ENCODE measurements at regions of chr1 and their contacts with region 1.

Region 1: DNA sequence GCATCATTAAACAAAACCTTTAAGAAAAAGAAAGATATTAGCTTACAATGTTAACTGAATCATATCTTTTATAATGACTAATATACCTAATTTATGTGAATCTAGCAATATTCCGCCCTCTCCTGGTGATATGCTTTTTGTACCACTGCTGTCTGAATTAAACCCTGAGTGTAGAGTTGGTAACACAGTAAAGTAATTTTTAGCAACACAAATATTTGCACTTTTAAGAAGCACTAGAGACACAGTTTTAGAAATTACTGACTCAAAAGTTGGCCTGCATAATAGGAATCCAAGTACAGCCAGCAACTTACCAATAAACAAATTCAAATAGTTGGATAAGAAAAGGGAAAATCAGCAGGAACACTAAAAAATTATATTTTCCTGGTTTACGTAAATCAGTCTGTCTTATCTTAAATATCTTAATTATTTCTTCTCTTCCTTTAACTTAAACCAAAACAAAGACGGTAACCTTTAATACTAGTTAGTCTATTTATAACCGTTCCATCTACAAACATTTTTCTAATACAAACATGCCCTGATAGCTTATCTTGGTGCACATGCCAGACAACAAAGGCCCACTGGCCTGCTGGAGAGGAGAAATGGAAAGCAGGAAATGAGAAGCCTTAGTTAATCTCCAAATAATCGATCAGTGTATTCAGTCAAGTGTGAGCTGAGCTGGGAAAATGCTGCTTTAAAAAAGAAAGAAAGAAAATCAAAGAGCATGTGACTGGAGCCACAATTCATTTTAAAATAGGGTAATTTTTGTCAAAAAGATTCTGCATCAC is 246.0 kb downstream of the RERE start:
- DNase-seq: peak; percentile 43
- H3K4me3 ChIP-seq: no peak overlapping the region; a peak in 1 of 4 replicates
- H3K27ac ChIP-seq: peak overlapping the region; percentile 34 to 90; a peak in 3 of 4 replicates
- H3K4me1 ChIP-seq: peaks cover 18 to 21% of the 10 kb centered on the region in 2 experiments; a peak in 3 of 4 replicates
- H3K27me3 ChIP-seq: no peaks in the 10 kb centered on the region
- CTCF ChIP-seq: peak; percentile 68
- EP300 ChIP-seq: peak in 1 of 2 experiments; percentile 6; a peak in 1 of 4 replicates
- RAD21 ChIP-seq: peak; percentile 51

Region 2: DNA sequence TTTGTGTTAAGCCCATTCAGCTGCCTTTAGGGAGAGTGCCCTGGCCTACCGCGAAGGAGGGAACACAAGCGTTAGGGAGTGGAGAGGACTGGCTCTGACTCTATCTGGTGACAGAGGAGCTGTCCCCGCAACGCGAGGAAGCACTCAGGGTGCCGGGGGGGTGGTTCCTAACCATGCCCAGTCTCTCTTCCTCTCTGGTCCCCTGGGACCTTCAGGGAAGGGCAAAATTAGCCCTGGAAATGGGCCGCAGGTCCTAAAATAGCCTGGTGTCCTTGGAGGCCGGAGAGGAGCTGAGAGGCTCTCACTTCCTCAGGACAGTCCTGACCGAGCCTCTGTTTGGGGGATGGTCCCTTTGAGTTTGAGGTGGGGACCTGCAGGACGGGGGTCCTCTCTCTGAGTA is 247.7 kb before region 1 on chr1:
- CTCF ChIA-PET with region 1: no interaction called
- POLR2A ChIA-PET with region 1: no interaction called
- DNase-seq: no peak
- H3K4me3 ChIP-seq: no peak overlapping the region
- H3K27ac ChIP-seq: no peak overlapping the region
- H3K4me1 ChIP-seq: no peaks in the 10 kb centered on the region; a peak in 1 of 4 replicates
- H3K27me3 ChIP-seq: no peaks in the 10 kb centered on the region
- CTCF ChIP-seq: no peak
- EP300 ChIP-seq: no peak
- RAD21 ChIP-seq: no peak

Region 3: GRCh38 chr1:8554956-8555534 is 16.3 kb before region 1 on chr1:
- CTCF ChIA-PET with region 1: interaction called, 10 read pairs
- POLR2A ChIA-PET with region 1: no interaction called
- DNase-seq: no peak
- H3K4me3 ChIP-seq: no peak overlapping the region
- H3K27ac ChIP-seq: peak overlapping the region; percentile 24 to 59; a peak in 2 of 4 replicates
- H3K4me1 ChIP-seq: peaks cover 0 to 2% of the 10 kb centered on the region in 2 experiments; a peak in 3 of 4 replicates
- H3K27me3 ChIP-seq: no peaks in the 10 kb centered on the region
- CTCF ChIP-seq: no peak
- EP300 ChIP-seq: no peak
- RAD21 ChIP-seq: no peak

Region 4: DNA sequence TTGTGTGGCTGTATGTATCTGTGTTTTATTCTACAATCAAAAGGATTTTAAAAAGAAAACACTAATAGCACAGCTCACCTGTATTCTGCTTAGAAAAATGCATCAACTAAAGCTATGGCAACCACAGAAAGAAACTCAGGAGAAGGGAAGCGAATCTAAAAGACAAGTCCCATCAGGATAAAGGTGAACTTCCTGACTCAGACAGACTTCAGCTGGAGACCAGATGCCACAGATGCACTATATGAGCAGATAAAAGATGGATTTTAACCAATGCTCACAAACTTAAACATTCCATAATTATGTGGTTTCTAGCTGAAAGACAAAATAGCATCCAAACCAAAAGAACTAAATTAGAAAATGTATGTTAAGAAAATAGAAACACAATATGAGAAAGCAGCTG is 15.0 kb after region 1 on chr1:
- CTCF ChIA-PET with region 1: interaction called, 44 read pairs
- POLR2A ChIA-PET with region 1: no interaction called
- DNase-seq: no peak
- H3K4me3 ChIP-seq: no peak overlapping the region
- H3K27ac ChIP-seq: peak overlapping the region in 1 of 2 experiments; percentile 56; a peak in 2 of 4 replicates
- H3K4me1 ChIP-seq: peaks cover 6 to 26% of the 10 kb centered on the region in 2 experiments; a peak in 3 of 4 replicates
- H3K27me3 ChIP-seq: no peaks in the 10 kb centered on the region
- CTCF ChIP-seq: no peak
- EP300 ChIP-seq: no peak
- RAD21 ChIP-seq: no peak

Region 5: DNA sequence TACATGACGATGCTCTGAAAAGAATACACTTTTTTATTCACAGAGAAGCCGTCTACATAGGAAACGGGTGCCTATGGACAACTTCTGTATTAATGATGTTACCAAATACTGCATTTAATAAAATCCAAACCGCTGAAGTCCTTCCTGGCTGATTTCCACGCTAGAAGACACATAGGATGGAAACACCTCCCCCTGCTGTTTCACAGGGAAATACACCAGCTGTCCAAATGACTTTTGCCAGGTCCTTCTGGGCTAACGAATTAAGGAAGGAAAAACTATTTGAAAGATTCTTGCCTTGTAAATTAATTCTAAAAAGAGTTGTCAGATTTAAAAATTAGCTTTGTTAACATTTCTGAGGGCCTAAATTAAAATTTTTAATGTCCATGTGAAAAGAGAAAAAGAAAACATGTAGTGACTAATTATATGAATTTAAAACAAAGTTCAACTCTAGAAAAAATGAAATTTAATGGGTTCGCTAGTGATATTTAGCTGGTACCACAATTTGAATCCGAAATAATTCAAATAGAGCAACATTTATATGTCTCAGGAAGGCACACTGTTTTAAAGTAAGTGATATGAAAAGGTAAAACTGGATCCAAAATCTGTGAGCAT is 100.0 kb after region 1 on chr1:
- CTCF ChIA-PET with region 1: interaction called, 16 read pairs
- POLR2A ChIA-PET with region 1: no interaction called
- DNase-seq: peak; percentile 60
- H3K4me3 ChIP-seq: no peak overlapping the region
- H3K27ac ChIP-seq: no peak overlapping the region; a peak in 1 of 4 replicates
- H3K4me1 ChIP-seq: peaks cover 30 to 52% of the 10 kb centered on the region in 2 experiments
- H3K27me3 ChIP-seq: no peaks in the 10 kb centered on the region
- CTCF ChIP-seq: peak; percentile 81
- EP300 ChIP-seq: no peak
- RAD21 ChIP-seq: peak; percentile 84